Right ventricle myocardium inferior (tissue), 1 donor: ENCODE measurements at regions of chr4 and their contacts with region 1.

Region 1: GRCh38 chr4:128809477-128810330 is at the start of gene JADE1:
- DNase-seq: peak; percentile 92
- ATAC-seq: peak; percentile 76
- total RNA-seq, gene JADE1: 24.3 TPM

Region 2: DNA sequence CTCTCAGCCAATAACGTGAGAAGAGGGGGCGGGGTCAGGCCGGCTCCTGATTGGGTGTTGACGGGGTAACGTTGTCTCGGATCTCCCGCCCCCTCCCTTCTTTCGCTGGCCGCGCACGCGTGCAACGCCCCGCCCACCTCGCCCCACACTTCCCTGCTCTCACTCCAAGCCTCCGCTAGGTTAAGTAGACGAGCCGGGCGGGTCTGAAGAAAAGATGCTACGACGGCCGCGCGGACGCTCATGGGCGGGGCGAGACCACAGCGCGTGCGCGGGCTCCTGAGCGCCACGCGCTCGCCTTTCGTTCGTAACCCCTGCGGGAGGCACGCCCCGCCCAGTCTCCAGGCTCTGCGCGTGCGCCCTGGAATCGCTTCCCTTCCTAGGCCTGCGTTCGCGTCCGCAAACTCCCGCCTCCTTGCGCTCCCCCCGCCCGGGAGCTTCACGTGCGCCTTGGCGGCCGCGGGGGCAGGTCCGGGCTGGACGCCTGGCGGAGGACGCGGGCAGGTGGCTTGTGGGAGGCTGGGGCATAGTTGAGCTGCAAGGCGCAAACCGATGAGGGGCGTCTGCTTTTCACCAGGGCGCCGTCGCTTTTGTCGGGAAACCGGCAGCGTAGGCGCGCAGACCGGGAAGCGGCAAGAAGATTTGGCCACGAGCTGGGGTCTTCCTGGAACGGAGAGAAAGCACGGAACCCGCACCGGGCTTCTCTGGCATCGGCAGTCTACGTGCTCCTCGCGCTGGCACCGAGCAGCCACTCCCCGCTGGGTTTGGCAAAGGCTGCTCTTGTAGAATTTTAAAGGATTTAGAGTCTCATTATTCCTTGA is 521.6 kb before region 1 on chr4:
- intact Hi-C with region 1: loop called (anchors 2 kb)
- DNase-seq: peak; percentile 100
- ATAC-seq: peak; percentile 96

Region 3: DNA sequence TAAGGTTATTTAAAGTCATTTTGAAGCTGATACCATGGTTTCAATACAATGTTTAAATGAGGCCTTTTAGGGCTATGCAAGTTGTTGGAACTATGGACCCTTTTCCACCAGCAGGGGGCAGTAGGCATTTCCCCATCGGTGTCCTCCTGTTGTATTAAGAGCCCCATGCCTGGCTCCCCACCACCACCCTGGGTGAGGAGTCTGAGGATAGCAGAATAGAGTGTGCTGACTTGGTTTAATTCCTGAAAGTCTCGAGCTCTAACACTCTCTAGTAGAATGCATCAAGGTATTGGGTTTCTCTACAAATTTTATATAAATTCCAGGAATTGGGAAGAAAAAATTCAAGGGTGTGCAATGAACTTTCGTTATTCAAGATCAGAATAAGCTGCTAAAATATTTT is 235.0 kb before region 1 on chr4:
- intact Hi-C with region 1: loop called (anchors 2 kb)
- DNase-seq: no peak
- ATAC-seq: peak; percentile 34

Region 4: DNA sequence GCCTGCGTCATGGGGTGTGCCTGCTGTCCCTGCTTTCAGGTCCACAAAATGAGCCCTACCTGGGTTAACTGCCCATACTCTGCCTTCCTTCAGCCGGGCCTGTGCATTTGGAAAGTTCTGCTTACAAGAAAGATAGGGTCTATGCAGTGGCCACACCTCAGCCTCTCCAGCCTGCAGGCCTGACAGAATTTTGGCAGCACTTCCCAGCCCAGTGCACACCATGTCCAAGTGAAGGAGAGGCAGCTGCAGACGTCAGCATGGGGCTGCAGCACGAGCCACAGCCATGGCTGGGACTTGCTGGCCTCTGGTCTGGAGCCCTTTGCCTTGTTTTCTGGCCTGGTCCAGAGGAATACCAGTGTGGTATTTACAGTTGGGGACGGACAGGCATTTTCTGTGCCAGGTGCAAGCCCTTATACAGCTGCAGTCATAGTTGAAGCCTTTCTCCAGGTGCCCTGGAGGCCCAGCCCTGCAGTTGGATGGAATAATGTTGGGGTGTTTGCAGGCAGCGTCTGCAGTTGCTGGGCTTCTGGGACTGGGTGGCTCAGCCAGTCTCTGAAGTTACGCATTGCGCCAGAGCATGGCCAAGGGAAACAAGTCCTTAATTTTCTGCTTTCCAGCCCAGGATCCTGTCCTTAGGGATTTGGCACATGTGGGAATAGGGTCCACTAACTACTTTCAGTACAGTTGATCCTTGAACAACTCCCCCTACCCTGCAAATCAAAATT is 26.0 kb after region 1 on chr4:
- intact Hi-C with region 1: loop called (anchors 2 kb)
- DNase-seq: peak; percentile 91
- ATAC-seq: peak; percentile 97

Region 5: DNA sequence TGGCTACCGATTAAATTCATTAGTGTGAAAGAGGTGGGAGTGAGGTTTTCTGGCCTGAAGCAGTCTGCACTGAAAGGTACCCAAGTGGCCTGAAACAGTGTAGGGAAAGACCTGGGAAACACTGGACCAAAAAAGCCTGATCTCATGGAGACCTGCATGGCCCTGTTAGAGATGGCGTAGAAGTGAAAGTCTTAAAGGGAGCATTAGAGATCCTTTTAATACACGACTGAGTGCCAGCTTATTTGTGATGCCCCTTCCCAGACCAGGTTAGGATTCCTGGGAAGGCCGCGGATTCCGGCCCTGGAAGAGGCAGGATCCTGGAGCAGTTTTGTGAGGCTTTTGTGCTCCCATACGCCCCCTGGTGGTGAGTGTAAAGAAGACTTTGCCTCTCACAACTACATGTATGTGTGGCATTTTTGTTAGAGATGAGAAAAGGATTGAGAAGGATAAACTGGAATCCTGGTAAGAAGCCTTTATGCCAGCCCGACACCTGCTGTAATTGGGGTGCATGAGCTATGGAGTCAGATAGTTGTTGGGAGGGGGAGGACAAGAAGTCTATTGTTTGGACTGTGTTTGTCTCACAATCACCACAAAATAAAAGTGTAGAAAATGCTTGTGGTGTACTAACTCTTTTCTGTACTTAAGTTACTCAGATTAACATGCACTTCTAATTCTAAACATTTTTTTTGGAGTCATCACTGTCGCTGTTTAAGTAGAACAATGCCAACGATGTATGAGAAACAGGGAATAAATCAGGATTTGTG is 53.8 kb after region 1 on chr4:
- intact Hi-C with region 1: loop called (anchors 2 kb)
- DNase-seq: no peak
- ATAC-seq: peak; percentile 69